Breast epithelium (tissue), 4 donors: ENCODE measurements at regions of chr1 and their contacts with region 1.

Region 1: DNA sequence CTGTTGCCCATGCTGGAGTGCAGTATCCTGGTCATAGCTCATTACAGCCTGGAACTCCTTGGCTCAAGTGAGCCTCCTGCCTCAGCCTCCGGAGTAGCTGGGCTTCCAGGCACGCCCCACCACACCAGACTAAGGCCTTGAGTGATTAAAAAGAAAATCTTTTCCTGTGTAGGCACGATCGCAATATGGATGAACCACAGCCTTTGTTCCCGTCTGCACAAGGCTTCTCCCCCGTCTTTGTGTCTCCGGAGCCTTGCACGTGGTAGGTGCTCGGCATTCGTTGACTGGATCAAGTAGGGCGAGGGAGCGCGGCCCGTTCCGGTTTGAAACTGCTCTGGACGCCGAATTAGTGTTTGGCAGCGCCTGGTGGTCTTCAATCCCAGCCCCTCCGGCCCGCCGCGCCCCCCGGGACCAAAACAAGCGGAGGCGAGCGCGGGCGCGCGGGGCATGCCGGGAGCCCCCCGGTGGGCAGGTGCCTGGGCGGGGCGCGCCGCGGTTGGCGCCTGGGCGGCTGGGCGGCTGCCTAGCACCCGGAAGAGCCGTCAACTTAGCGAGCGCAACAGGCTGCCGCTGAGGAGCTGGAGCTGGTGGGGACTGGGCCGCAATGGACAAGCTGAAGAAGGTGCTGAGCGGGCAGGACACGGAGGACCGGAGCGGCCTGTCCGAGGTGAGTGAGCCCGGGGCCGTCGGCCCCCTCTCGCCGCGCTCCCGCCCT is at the start of gene SFT2D2:
- DNase-seq: peak; percentile 64 to 70
- H3K4me3 ChIP-seq: peak within 1 kb of the TSS; percentile 79 to 98 (median 95)
- H3K27ac ChIP-seq: peak within 1 kb of the TSS; percentile 91 to 94
- H3K4me1 ChIP-seq: peaks cover 0 to 9% of the 10 kb centered on the region in 2 donors
- H3K27me3 ChIP-seq: no peaks in the 10 kb centered on the region
- CTCF ChIP-seq: no peak
- POLR2A ChIP-seq: peak; percentile 16
- total RNA-seq, gene SFT2D2: 39.3 to 70.4 (median 42.2) TPM

Region 2: GRCh38 chr1:166579557-166580501 is 1645.8 kb before region 1 on chr1:
- intact Hi-C with region 1: no loop called
- DNase-seq: no peak
- H3K4me3 ChIP-seq: no peak overlapping the region
- H3K27ac ChIP-seq: no peak overlapping the region
- H3K4me1 ChIP-seq: no peaks in the 10 kb centered on the region
- H3K27me3 ChIP-seq: no peaks in the 10 kb centered on the region
- CTCF ChIP-seq: no peak
- POLR2A ChIP-seq: no peak

Region 3: DNA sequence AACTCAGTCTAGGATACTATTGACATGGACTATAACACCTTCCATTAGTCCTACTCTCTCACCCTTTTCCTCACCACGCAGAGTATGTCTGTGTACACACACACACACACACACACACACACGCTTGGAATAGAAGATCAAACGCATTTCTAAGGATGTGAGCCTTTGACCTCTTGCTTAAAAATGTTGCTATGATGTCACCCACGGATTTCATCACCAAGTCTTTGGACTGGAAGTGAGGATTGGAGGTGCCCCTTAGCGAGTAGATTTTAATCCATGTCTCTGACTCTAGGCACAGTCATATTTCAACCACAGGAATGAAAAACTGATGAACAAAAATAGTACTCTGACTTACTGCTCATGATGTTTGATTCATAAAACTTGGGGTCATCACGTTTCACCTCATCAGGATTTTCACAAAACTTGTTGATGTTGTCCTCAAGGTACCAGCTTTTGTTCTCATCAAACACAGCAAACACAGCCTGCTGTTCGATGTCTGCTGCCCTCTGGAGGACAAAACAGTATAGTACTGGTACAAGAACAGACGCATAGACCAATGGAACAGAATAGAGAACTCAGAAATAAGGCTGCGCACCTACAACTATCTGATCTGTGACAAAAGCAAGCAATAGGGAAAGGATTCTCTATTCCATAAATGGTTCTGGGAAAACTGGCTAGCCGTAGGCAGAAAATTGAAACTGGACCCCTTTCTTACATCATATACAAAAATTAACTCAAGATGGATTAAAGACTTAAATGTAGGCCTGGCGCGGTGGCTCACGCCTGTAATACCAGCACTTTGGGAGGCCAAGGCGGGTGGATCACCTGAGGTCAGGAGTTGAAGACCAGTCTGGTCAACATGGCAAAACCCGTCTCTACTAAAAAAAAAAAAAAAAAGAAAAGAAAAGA is 1320.7 kb after region 1 on chr1:
- intact Hi-C with region 1: loop called (anchors 5 kb)
- DNase-seq: peak in 1 of 2 donors; percentile 48
- H3K4me3 ChIP-seq: no peak overlapping the region
- H3K27ac ChIP-seq: no peak overlapping the region
- H3K4me1 ChIP-seq: no peaks in the 10 kb centered on the region
- H3K27me3 ChIP-seq: no peaks in the 10 kb centered on the region
- CTCF ChIP-seq: peak; percentile 65 to 85 (median 84)
- POLR2A ChIP-seq: no peak